CD8-positive, alpha-beta T cell (primary cell): ENCODE measurements at regions of chr16 and their contacts with region 1.

Region 1: GRCh38 chr16:56988948-56989945 is at the start of gene NLRC5:
- DNase-seq: peak; percentile 79 to 95 (median 89)
- ATAC-seq: peak; percentile 81
- H3K4me3 ChIP-seq: peak within 1 kb of the TSS; percentile 98
- H3K4me3 Mint-ChIP-seq: peak within 1 kb of the TSS; percentile 100
- H3K27ac ChIP-seq: peak within 1 kb of the TSS; percentile 90 to 92
- H3K27ac Mint-ChIP-seq: peak within 1 kb of the TSS; percentile 98
- H3K4me1 ChIP-seq: peaks cover 70% of the 10 kb centered on the region
- H3K4me1 Mint-ChIP-seq: peaks cover 74% of the 10 kb centered on the region
- H3K27me3 ChIP-seq: no peaks in the 10 kb centered on the region
- H3K27me3 Mint-ChIP-seq: no peaks in the 10 kb centered on the region
- CTCF ChIP-seq: no peak
- total RNA-seq, gene NLRC5: 670 to 690 TPM

Region 2: DNA sequence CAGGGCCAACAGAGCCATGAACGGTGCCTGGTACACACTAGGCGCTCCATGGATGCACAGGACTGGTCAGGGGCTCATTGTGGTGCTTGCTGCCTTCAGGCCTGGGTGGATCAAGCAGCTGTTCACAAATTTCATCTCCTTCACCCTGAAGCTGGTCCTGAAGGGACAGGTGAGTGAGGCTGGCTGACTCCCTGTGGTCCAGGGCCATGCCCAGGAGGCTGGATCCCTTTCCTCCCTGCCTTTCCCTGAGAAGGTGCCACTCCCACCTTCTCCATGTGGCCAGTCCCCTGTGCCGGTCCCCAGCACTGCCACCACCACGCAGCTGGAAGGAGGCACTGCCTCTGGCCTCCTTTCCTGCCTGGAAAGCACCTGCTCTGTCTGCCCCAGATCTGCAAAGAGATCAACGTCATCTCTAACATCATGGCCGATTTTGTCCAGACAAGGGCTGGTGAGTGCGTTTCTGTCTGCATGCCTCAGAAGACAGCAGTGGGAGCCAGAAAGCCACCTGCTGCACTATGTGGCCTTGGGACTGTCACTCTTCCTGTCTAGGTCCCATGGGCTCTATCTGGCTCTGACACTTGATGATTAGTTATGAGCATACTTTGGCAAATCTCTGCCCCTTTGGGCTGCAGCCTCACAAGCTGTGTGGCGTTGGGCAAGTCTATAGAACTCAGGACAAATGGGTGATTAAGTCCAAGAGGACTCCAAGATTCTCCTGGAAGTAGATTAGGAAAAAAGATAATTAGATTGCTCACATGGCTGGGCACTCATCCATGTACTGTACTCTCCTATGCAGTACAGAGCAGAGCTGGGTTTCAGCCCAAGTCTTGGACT is 18.1 kb before region 1 on chr16:
- CTCF ChIA-PET with region 1: interaction called, 117 read pairs
- POLR2A ChIA-PET with region 1: interaction called, 18 read pairs
- intact Hi-C with region 1: no loop called
- DNase-seq: peak in 2 of 9 experiments; percentile 28 to 39
- ATAC-seq: peak; percentile 48
- H3K4me3 ChIP-seq: no peak overlapping the region
- H3K4me3 Mint-ChIP-seq: no peak overlapping the region
- H3K27ac ChIP-seq: no peak overlapping the region
- H3K27ac Mint-ChIP-seq: peak overlapping the region; percentile 63
- H3K4me1 ChIP-seq: peaks cover 53% of the 10 kb centered on the region
- H3K4me1 Mint-ChIP-seq: peaks cover 46% of the 10 kb centered on the region
- H3K27me3 ChIP-seq: no peaks in the 10 kb centered on the region
- H3K27me3 Mint-ChIP-seq: no peaks in the 10 kb centered on the region
- CTCF ChIP-seq: no peak

Region 3: GRCh38 chr16:57013229-57013628 is 24.0 kb after region 1 on chr16:
- CTCF ChIA-PET with region 1: interaction called, 3 read pairs
- POLR2A ChIA-PET with region 1: interaction called, 56 read pairs
- intact Hi-C with region 1: loop called in 1 of 2 experiments (anchors 1 kb)
- DNase-seq: no peak
- ATAC-seq: no peak
- H3K4me3 ChIP-seq: no peak overlapping the region
- H3K4me3 Mint-ChIP-seq: peak overlapping the region; percentile 54
- H3K27ac ChIP-seq: peak overlapping the region in 1 of 2 experiments; percentile 89
- H3K27ac Mint-ChIP-seq: peak overlapping the region; percentile 97
- H3K4me1 ChIP-seq: peaks cover 90% of the 10 kb centered on the region
- H3K4me1 Mint-ChIP-seq: peaks cover 83% of the 10 kb centered on the region
- H3K27me3 ChIP-seq: no peaks in the 10 kb centered on the region
- H3K27me3 Mint-ChIP-seq: no peaks in the 10 kb centered on the region
- CTCF ChIP-seq: no peak

Region 4: DNA sequence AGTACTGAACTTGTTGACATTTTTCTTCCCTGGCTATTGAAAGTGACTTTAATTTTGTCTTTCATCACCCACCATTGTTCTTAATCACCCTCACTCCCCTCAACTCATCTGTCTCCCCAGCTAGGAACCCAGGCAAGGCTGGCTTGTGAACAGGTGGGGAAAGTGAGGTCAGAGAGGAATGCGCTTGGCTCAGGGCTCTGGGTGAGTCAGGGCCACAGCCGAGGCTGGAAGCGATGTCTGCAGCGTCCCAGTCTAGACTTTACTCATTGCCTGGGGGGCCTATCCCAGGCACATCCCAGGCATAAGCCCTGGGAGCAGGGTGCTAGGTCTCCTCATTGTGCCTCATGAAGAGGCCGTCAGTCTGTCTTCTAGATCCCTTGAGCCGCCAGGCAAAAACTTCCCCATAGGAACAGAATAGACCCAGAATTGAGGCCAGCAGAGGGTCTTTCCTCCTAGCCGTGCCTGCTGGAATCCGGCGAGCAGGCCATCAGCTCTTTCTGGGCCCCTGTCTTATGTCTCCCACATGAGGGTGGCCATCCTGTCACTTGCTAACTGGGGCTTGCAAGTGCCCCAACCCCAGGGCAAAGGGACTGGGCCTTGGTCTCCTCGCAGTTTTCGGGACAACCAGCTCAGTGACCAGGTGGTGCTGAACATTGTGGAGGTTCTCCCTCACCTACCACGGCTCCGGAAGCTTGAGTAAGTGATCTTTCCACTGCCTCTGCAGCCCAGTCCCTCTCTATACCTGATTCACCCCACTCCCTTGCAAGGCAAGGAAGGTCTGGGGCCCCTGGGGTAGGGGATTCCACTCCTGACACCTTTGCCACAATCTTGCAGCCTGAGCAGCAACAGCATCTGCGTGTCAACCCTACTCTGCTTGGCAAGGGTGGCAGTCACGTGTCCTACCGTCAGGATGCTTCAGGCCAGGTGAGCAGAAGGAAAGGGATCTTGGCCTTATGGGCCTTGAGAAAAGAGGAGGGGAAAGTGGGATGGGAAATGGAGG is 40.2 kb after region 1 on chr16:
- CTCF ChIA-PET with region 1: interaction called, 4 read pairs
- POLR2A ChIA-PET with region 1: interaction called, 34 read pairs
- intact Hi-C with region 1: no loop called
- DNase-seq: peak in 4 of 9 experiments; percentile 30 to 83 (median 72)
- ATAC-seq: peak; percentile 73
- H3K4me3 ChIP-seq: no peak overlapping the region
- H3K4me3 Mint-ChIP-seq: no peak overlapping the region
- H3K27ac ChIP-seq: peak overlapping the region in 1 of 2 experiments; percentile 50
- H3K27ac Mint-ChIP-seq: peak overlapping the region; percentile 84
- H3K4me1 ChIP-seq: peaks cover 78% of the 10 kb centered on the region
- H3K4me1 Mint-ChIP-seq: peaks cover 90% of the 10 kb centered on the region
- H3K27me3 ChIP-seq: no peaks in the 10 kb centered on the region
- H3K27me3 Mint-ChIP-seq: no peaks in the 10 kb centered on the region
- CTCF ChIP-seq: no peak

Region 5: DNA sequence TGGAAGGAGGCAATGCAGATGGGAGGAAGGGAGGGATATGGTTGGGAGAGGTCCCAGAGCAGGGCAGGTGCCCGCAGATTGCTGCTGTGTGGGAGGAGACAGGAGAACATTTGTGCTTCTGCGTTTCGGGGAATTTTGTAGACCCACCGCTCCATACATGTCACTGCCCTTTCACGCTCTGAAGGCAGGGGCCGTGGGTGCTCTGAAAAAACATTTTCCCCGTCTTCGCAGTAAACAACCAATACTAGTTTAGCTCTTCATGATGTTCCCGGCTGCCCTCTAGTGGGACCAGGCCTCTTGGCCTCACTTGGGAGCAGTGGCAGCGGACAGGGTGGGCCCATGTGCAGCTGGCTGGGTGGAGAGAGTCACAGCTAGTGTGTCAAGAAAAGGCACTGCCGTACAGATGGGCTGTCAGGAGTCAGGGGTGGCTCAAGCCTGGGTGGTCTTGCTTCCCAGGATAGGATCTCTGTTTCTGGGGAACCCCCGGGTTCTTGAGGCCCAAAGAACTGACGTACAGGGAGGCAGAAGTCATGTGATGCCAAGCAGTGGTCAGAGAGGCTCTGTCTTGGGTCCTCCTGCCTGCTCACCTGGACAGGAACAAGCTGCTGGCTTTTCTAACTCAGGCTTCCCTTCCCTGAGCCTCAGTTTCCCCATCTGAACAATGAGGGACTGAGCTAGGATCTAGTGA is 56.6 kb after region 1 on chr16:
- CTCF ChIA-PET with region 1: interaction called, 25 read pairs
- POLR2A ChIA-PET with region 1: interaction called, 34 read pairs
- intact Hi-C with region 1: loop called (anchors 1 kb)
- DNase-seq: peak in 8 of 9 experiments; percentile 27 to 76 (median 58)
- ATAC-seq: peak; percentile 5
- H3K4me3 ChIP-seq: no peak overlapping the region
- H3K4me3 Mint-ChIP-seq: peak overlapping the region; percentile 50
- H3K27ac ChIP-seq: peak overlapping the region; percentile 2 to 59
- H3K27ac Mint-ChIP-seq: peak overlapping the region; percentile 93
- H3K4me1 ChIP-seq: peaks cover 52% of the 10 kb centered on the region
- H3K4me1 Mint-ChIP-seq: peaks cover 54% of the 10 kb centered on the region
- H3K27me3 ChIP-seq: no peaks in the 10 kb centered on the region
- H3K27me3 Mint-ChIP-seq: no peaks in the 10 kb centered on the region
- CTCF ChIP-seq: peak; percentile 38